ENCODE measurements at regions of chr11 and their contacts with region 1.

Region 1: DNA sequence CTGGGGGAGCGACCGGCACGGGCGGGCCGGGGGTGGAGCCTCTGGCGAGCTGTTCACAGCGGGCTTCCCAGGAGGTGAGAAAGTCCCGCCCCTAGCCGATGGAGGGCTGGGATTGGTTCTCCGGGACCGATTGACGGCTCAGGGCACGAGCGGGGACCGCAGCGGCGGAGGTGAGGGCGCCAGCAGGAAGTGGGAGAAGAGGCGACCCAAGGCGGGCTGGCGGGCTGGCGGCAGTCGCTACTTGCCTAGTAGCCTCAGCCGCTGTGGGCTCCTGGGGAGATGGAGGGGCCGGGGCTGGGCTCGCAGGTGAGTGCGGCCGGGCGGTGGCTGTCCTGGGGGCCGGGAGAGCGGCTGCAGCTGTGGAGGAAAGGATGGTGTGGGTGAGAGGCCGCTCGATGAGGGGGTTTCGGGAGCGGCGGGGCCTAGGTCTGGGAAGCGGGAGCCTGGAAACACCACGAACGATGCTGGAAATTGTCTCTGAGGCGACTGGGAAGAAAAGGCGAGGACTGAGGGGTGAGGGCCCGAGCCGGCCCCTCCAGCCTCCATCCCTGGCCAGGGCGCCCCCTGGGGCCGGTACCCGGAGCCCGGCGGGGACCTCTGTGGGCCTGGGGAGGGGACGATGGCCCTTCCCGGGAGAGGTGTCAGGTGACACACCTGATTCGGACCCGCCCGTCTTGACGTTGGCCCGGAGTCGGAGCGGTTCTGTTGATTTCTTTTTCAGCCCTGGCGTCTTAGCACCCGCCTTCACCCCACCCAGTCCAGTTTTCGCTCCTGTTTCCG is at the start of gene ZDHHC13:
- DNase-seq: peak; percentile 89
- ATAC-seq: peak; percentile 99
- H3K4me3 Mint-ChIP-seq: peak within 1 kb of the TSS; percentile 95
- H3K27ac Mint-ChIP-seq: peak within 1 kb of the TSS; percentile 77
- H3K4me1 Mint-ChIP-seq: peaks cover 51% of the 10 kb centered on the region
- H3K27me3 Mint-ChIP-seq: no peaks in the 10 kb centered on the region
- CTCF ChIP-seq: no peak
- total RNA-seq, gene ZDHHC13: 17.1 and 25.2 TPM in 2 replicates

Region 2: GRCh38 chr11:19049351-19049750 is 67.8 kb before region 1 on chr11:
- CTCF ChIA-PET with region 1: no interaction called
- POLR2A ChIA-PET with region 1: no interaction called
- intact Hi-C with region 1: no loop called
- DNase-seq: no peak
- ATAC-seq: no peak
- H3K4me3 Mint-ChIP-seq: no peak overlapping the region
- H3K27ac Mint-ChIP-seq: no peak overlapping the region
- H3K4me1 Mint-ChIP-seq: no peaks in the 10 kb centered on the region
- H3K27me3 Mint-ChIP-seq: peaks cover 14% of the 10 kb centered on the region
- CTCF ChIP-seq: no peak

Region 3: GRCh38 chr11:19076744-19077589 is 40.2 kb before region 1 on chr11:
- CTCF ChIA-PET with region 1: interaction called, 6 read pairs
- POLR2A ChIA-PET with region 1: no interaction called
- intact Hi-C with region 1: loop called (anchors 1 kb)
- DNase-seq: peak; percentile 31
- ATAC-seq: peak; percentile 81
- H3K4me3 Mint-ChIP-seq: no peak overlapping the region
- H3K27ac Mint-ChIP-seq: no peak overlapping the region
- H3K4me1 Mint-ChIP-seq: no peaks in the 10 kb centered on the region
- H3K27me3 Mint-ChIP-seq: peaks cover 11% of the 10 kb centered on the region
- CTCF ChIP-seq: peak; percentile 98

Region 4: DNA sequence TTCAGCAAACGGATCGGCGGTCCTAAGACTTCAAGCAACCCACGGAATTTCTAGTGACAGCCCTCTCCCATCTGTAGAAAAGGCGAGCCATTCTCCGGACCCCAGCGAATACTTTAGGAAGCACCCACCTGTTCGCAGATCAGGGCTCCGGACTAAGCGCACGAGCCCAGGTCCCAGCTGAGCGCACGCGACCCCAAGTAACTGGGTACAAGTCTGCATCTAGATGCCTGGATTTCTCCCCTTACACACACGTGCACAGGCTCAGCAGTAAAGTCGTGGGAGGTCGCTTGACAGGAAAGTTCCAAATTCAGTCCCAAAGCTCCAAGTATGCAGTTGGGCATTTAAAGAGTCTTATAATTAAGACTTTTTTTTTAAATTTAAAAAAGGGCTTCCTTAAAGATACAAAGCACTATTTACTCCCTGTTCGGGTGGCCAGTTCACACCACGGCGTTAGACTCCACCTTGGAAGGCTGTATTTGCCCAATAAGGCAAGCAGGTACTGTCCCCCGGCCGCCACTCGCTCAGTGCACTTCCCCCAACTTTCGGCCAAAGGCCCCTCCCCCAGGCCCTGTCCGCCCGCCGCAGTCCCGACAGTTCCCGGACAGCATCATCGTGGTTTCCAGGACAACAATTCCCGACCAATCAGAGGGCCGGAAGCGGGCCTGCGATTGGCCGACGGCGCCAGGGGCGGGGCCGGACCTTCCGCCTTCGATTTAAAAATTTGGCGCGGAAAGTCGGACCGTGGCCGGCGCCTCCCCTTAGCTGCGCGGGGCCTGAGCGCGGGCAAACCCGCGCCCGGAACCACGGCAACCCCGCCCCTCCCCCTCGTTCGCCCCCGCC is 123.5 kb after region 1 on chr11 and contains the start of gene E2F8:
- CTCF ChIA-PET with region 1: no interaction called
- POLR2A ChIA-PET with region 1: no interaction called
- intact Hi-C with region 1: loop called (anchors 1 kb)
- DNase-seq: peak; percentile 79
- ATAC-seq: peak; percentile 90
- H3K4me3 Mint-ChIP-seq: peak within 1 kb of the TSS; percentile 89
- H3K27ac Mint-ChIP-seq: peak within 1 kb of the TSS; percentile 46
- H3K4me1 Mint-ChIP-seq: peaks cover 18% of the 10 kb centered on the region
- H3K27me3 Mint-ChIP-seq: peaks cover 20% of the 10 kb centered on the region
- CTCF ChIP-seq: no peak
- total RNA-seq, gene E2F8: 0.82 and 0.88 TPM in 2 replicates

Region 5: DNA sequence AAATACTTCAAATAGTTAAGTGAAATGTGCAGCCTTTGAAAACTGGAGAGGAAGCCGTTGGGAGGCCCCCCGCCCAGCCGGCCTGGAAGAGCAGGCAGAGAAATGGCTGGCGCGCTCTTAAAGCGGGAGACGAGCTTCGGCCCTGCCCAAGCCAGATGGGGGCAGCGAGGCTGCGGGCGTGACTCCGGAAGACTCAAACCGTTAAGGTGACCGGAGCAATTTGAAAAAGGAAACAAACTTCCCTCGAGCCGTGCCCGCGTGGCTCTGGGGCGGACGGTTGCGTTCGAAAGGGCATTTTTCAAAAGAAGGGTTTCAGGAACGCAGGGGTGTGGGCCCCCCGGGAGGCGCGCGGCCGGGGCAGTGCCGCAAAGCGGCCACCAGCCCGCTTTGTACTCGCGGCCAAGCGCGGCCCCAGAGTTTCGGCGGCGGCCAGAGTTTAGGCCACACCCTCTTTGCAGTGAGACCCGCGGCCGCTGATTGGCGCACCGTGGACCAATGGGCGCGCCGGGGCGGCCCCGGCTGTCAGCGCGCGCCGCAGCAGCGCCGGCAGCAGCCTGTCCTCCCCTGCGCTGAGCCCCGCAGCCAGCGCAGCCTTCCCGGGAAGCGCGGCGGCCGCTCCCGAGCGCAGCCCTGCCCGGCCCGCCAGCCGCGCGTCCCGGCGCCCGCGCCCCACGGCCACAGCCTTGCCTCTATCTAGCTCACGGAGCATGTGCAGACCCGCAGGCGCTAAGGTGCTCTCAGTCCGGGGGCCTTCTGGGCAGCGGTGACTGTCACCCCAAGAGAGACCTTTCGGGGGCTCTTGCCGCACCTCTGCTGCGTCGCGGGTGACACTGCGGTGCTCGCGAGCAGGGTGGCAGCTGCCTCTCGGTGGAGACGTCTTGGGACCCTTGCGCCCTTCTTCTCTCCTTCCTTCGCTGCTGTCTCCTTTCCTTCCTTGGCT is 595.4 kb after region 1 on chr11 and contains the start of gene NAV2:
- CTCF ChIA-PET with region 1: no interaction called
- POLR2A ChIA-PET with region 1: no interaction called
- intact Hi-C with region 1: loop called (anchors 2 kb)
- DNase-seq: peak; percentile 63
- ATAC-seq: peak; percentile 100
- H3K4me3 Mint-ChIP-seq: peak within 1 kb of the TSS; percentile 87
- H3K27ac Mint-ChIP-seq: no peak within 1 kb of the TSS
- H3K4me1 Mint-ChIP-seq: peaks cover 25% of the 10 kb centered on the region
- H3K27me3 Mint-ChIP-seq: peaks cover 39% of the 10 kb centered on the region
- CTCF ChIP-seq: no peak
- total RNA-seq, gene NAV2: 9.0 and 10.3 TPM in 2 replicates

Region 6: GRCh38 chr11:19777377-19778102 is 660.4 kb after region 1 on chr11:
- CTCF ChIA-PET with region 1: no interaction called
- POLR2A ChIA-PET with region 1: interaction called, 5 read pairs
- intact Hi-C with region 1: loop called (anchors 5 kb)
- DNase-seq: peak; percentile 27
- ATAC-seq: peak; percentile 90
- H3K4me3 Mint-ChIP-seq: peak overlapping the region; percentile 87
- H3K27ac Mint-ChIP-seq: peak overlapping the region; percentile 82
- H3K4me1 Mint-ChIP-seq: peaks cover 20% of the 10 kb centered on the region
- H3K27me3 Mint-ChIP-seq: peaks cover 38% of the 10 kb centered on the region
- CTCF ChIP-seq: no peak

Region 7: GRCh38 chr11:20387241-20388095 is 1270.3 kb after region 1 on chr11 and contains the start of gene PRMT3:
- CTCF ChIA-PET with region 1: no interaction called
- POLR2A ChIA-PET with region 1: no interaction called
- intact Hi-C with region 1: loop called (anchors 10 kb)
- DNase-seq: peak; percentile 99
- ATAC-seq: peak; percentile 84
- H3K4me3 Mint-ChIP-seq: peak within 1 kb of the TSS; percentile 97
- H3K27ac Mint-ChIP-seq: peak within 1 kb of the TSS; percentile 100
- H3K4me1 Mint-ChIP-seq: peaks cover 28% of the 10 kb centered on the region
- H3K27me3 Mint-ChIP-seq: no peaks in the 10 kb centered on the region
- CTCF ChIP-seq: peak; percentile 62
- total RNA-seq, gene PRMT3: 21.7 and 24.9 TPM in 2 replicates